Right cardiac atrium (tissue), 5 donors: ENCODE measurements at regions of chr10 and their contacts with region 1.

Region 1: GRCh38 chr10:95474228-95475002 is 86.8 kb downstream of the SORBS1 start:
- DNase-seq: no peak
- ATAC-seq: peak; percentile 74 to 75
- H3K4me3 ChIP-seq: no peak overlapping the region
- H3K27ac ChIP-seq: peak overlapping the region; percentile 95
- H3K4me1 ChIP-seq: peaks cover 24% of the 10 kb centered on the region
- H3K27me3 ChIP-seq: no peaks in the 10 kb centered on the region

Region 2: DNA sequence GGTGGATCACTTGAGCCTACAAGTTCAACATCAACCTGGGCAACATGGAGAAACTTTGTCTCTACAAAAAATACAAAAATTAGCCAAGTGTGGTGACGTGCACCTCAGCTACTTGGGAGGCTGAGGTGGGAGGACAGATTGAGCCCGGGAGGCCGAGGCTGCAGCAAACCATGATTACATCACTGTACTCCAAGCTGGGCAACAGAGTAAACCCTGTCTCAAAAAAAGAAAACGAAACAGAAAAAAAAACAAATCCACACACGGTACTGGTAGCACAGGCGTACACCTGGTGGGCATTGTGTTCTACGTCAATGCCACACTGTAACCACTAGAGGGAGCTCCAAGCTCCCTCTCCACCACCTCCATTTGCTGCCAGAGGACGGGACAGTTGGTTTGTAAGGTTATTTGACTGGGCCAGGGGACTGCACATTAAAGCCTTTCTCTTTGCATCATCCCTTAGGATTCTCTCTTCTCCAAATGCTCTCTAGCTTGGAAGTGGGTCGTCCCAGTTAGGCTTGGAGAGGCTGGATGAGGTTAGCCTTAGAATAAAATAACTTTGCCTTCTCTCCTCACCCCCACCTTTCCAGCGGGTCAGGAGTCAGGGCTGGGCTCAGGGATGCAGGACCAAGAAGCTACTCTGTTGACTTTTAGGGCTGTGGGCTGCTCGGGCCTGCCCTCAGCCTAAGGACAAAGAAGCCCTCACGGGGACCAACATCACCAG is 44.0 kb before region 1 on chr10:
- intact Hi-C with region 1: loop called in 1 of 4 experiments (anchors 5 kb)
- DNase-seq: peak in 1 of 3 donors; percentile 59
- ATAC-seq: peak; percentile 56 to 71
- H3K4me3 ChIP-seq: no peak overlapping the region
- H3K27ac ChIP-seq: peak overlapping the region; percentile 79
- H3K4me1 ChIP-seq: peaks cover 28% of the 10 kb centered on the region
- H3K27me3 ChIP-seq: no peaks in the 10 kb centered on the region

Region 3: DNA sequence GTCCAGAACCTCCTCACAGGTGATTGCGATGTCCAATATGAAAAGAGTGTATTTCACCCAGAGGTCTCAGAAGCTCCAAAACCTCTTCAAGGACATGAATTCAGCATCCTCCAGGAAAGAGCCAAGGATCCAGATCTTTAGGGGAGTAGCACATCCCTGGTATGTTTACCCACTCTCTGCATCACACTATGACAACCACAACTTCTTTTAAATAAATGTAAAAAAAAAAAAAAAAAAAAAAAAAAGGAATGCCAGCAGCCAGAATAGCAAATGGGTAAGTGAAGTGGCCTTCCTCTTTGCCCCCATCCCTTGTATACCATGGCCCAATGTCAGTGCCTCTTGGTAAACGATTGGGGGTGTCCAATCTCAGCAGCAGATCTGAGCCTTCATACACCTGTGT is 19.4 kb after region 1 on chr10:
- intact Hi-C with region 1: loop called in 1 of 4 experiments (anchors 2 kb)
- DNase-seq: no peak
- ATAC-seq: no peak
- H3K4me3 ChIP-seq: no peak overlapping the region
- H3K27ac ChIP-seq: peak overlapping the region; percentile 83
- H3K4me1 ChIP-seq: peaks cover 22% of the 10 kb centered on the region
- H3K27me3 ChIP-seq: no peaks in the 10 kb centered on the region

Region 4: GRCh38 chr10:95559471-95559870 is 85.1 kb after region 1 on chr10:
- intact Hi-C with region 1: no loop called
- DNase-seq: no peak
- ATAC-seq: no peak
- H3K4me3 ChIP-seq: peak overlapping the region; percentile 89
- H3K27ac ChIP-seq: peak overlapping the region; percentile 77
- H3K4me1 ChIP-seq: peaks cover 11% of the 10 kb centered on the region
- H3K27me3 ChIP-seq: no peaks in the 10 kb centered on the region

Region 5: GRCh38 chr10:95572131-95572820 is 97.9 kb after region 1 on chr10:
- intact Hi-C with region 1: no loop called
- DNase-seq: no peak
- ATAC-seq: no peak
- H3K4me3 ChIP-seq: no peak overlapping the region
- H3K27ac ChIP-seq: no peak overlapping the region
- H3K4me1 ChIP-seq: peaks cover 2% of the 10 kb centered on the region
- H3K27me3 ChIP-seq: no peaks in the 10 kb centered on the region